Activated CD4-positive, alpha-beta T cell treated with anti-CD3 and anti-CD28 coated beads, Interleukin-2, amount 10 ng/mL, durations not matched to agents 7 days and 5 days (primary cell): ENCODE measurements at regions of chr5 and their contacts with region 1.

Region 1: DNA sequence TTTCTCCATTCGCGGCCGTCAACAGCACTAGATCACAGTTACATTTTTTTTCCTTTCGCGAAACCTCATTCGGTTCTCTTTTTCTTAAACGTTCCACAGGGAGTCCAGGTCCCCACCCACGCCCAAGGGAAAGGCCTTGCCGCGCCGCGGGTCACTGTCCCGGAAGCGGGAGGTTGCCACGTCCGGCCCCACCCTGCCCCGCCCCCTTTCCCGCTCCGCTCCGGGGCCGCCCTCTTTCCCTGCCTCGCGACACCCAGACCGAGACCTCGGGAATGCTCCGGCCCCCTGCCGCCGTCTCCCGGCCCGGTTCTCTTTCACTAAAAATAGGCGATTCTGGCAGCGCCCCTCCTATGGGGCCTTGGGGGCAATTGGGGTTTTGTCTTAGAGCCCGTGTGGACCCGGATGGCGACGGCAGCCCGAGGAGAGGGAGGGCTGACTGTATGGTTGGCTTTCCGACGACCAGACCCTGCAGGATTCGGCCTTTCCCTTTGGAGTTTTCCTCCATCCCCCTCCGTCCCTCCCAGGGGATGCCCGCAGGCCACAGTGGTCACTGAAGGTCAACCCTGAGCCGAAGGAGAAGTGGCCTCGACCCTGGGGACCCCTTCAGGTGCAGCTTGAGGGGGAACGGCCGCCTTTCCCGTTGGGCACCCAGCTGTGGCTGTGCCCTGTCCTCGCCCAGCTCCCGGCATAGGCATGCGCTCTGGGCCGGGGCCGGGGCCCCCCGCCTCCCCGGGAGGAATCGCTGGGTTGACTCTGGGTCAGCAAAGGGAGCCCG is 2.8 kb upstream of the RACK1 start:
- DNase-seq: peak; percentile 75
- H3K4me3 Mint-ChIP-seq: peak overlapping the region; percentile 98
- H3K27ac Mint-ChIP-seq: peak overlapping the region; percentile 94
- H3K4me1 Mint-ChIP-seq: peaks cover 70% of the 10 kb centered on the region
- H3K27me3 Mint-ChIP-seq: no peaks in the 10 kb centered on the region

Region 2: DNA sequence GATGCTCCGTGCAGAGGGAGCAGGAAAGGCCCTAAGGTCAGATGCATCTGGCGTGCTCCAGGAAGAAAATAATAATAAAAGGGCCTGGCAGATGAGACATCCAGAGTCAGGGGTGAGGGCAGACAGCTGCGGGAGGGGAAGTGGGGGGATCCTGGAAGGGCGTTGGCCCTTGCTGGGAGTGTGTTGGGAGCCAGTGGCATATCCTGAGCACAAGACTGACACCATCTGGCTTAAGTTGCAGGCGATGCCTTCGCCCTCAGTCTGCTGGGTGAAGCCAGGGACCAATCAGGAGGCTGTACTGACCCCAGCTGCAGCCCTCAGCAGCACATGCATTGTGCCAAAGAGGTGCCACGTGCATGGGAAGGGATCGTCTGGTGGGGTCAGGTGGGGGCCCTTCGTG is 95.3 kb before region 1 on chr5:
- CTCF ChIA-PET with region 1: no interaction called
- POLR2A ChIA-PET with region 1: no interaction called
- DNase-seq: no peak
- H3K4me3 Mint-ChIP-seq: no peak overlapping the region
- H3K27ac Mint-ChIP-seq: no peak overlapping the region
- H3K4me1 Mint-ChIP-seq: peaks cover 8% of the 10 kb centered on the region
- H3K27me3 Mint-ChIP-seq: peaks cover 10% of the 10 kb centered on the region

Region 3: GRCh38 chr5:181198963-181199519 is 47.4 kb before region 1 on chr5:
- CTCF ChIA-PET with region 1: no interaction called
- POLR2A ChIA-PET with region 1: no interaction called
- DNase-seq: no peak
- H3K4me3 Mint-ChIP-seq: no peak overlapping the region
- H3K27ac Mint-ChIP-seq: no peak overlapping the region
- H3K4me1 Mint-ChIP-seq: peaks cover 4% of the 10 kb centered on the region
- H3K27me3 Mint-ChIP-seq: peaks cover 40% of the 10 kb centered on the region

Region 4: GRCh38 chr5:181212934-181213333 is 33.5 kb before region 1 on chr5:
- CTCF ChIA-PET with region 1: no interaction called
- POLR2A ChIA-PET with region 1: no interaction called
- DNase-seq: no peak
- H3K4me3 Mint-ChIP-seq: no peak overlapping the region
- H3K27ac Mint-ChIP-seq: no peak overlapping the region
- H3K4me1 Mint-ChIP-seq: peaks cover 24% of the 10 kb centered on the region
- H3K27me3 Mint-ChIP-seq: no peaks in the 10 kb centered on the region

Region 5: GRCh38 chr5:181234455-181235306 is 11.8 kb before region 1 on chr5:
- CTCF ChIA-PET with region 1: interaction called, 10 read pairs
- POLR2A ChIA-PET with region 1: no interaction called
- DNase-seq: no peak
- H3K4me3 Mint-ChIP-seq: no peak overlapping the region
- H3K27ac Mint-ChIP-seq: peak overlapping the region; percentile 9
- H3K4me1 Mint-ChIP-seq: peaks cover 36% of the 10 kb centered on the region
- H3K27me3 Mint-ChIP-seq: no peaks in the 10 kb centered on the region

Region 6: GRCh38 chr5:181260387-181261319 is 14.2 kb after region 1 on chr5 and contains the start of gene TRIM52:
- CTCF ChIA-PET with region 1: interaction called, 22 read pairs
- POLR2A ChIA-PET with region 1: no interaction called
- DNase-seq: peak; percentile 93
- H3K4me3 Mint-ChIP-seq: peak within 1 kb of the TSS; percentile 94
- H3K27ac Mint-ChIP-seq: peak within 1 kb of the TSS; percentile 95
- H3K4me1 Mint-ChIP-seq: peaks cover 46% of the 10 kb centered on the region
- H3K27me3 Mint-ChIP-seq: no peaks in the 10 kb centered on the region
- total RNA-seq, gene TRIM52: 29.6 to 29.9 TPM